ENCODE measurements at regions of chr4 and their contacts with region 1.

Region 1: GRCh38 chr4:88284439-88285234 is at the start of gene PPM1K:
- DNase-seq: peak; percentile 100
- ATAC-seq: peak; percentile 88
- H3K4me3 Mint-ChIP-seq: peak within 1 kb of the TSS; percentile 96
- H3K27ac Mint-ChIP-seq: peak within 1 kb of the TSS; percentile 100
- H3K4me1 Mint-ChIP-seq: peaks cover 35% of the 10 kb centered on the region
- H3K27me3 Mint-ChIP-seq: no peaks in the 10 kb centered on the region
- total RNA-seq, gene PPM1K: 44.2 to 53.4 TPM

Region 2: DNA sequence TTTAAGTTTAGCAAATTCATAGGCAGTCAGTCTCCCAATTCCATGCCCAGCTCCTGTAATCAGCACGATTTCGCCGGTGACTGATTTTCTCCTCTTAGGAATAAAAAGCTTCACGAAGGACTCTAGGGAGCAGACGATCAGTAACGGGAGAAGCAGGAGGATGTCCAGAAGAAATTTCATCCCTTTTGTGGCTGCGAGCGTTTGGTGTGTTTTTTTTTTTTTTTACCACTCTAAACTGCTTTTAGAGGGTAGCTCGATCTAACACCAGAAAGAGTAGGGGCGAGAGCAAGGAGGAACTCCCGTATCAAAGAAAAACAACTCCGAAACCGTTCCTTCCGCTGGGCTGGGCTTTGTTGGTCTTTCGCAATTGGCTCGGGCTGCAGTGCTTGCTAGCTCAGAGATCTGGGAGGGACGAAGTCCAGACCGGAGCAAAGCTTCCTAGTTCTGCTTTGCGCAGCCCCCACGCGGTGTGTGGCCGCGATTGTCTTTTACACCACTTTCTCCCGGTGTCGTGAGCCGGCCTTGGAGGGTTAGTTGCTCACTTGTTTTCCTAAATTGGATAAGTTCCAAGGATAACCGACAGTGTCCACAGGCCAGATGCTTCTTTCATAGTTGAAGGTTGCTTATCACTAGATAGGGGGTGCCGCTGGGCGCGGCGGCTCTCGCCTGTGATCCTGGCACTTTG is 893.6 kb before region 1 on chr4 and contains the start of gene HSD17B11:
- CTCF ChIA-PET with region 1: no interaction called
- POLR2A ChIA-PET with region 1: no interaction called
- intact Hi-C with region 1: loop called in 1 of 2 experiments (anchors 2 kb)
- DNase-seq: peak; percentile 87
- ATAC-seq: peak; percentile 98
- H3K4me3 Mint-ChIP-seq: peak within 1 kb of the TSS; percentile 78
- H3K27ac Mint-ChIP-seq: peak within 1 kb of the TSS; percentile 92
- H3K4me1 Mint-ChIP-seq: peaks cover 47% of the 10 kb centered on the region
- H3K27me3 Mint-ChIP-seq: no peaks in the 10 kb centered on the region
- total RNA-seq, gene HSD17B11: 12.0 to 14.9 TPM

Region 3: DNA sequence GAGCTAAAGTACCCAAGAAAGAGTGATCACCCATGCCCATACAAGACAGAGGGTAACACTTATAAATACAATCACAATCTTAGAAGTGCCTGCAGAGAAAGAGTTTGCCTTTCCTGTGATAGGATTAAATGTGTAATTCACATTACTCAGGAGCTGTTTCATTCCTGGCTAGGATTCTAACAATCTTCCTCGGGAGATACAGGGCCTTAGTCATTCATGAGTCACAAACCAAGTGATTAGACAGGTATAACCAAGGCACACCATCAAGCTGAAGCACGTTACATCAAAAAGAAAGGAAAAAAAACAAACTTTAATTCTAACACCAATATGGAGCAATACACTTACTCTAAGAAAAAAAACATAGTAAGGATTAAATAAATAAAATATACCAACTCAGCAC is 141.1 kb before region 1 on chr4:
- CTCF ChIA-PET with region 1: no interaction called
- POLR2A ChIA-PET with region 1: no interaction called
- intact Hi-C with region 1: no loop called
- DNase-seq: no peak
- ATAC-seq: no peak
- H3K4me3 Mint-ChIP-seq: no peak overlapping the region
- H3K27ac Mint-ChIP-seq: no peak overlapping the region
- H3K4me1 Mint-ChIP-seq: no peaks in the 10 kb centered on the region
- H3K27me3 Mint-ChIP-seq: peaks cover 2% of the 10 kb centered on the region

Region 4: DNA sequence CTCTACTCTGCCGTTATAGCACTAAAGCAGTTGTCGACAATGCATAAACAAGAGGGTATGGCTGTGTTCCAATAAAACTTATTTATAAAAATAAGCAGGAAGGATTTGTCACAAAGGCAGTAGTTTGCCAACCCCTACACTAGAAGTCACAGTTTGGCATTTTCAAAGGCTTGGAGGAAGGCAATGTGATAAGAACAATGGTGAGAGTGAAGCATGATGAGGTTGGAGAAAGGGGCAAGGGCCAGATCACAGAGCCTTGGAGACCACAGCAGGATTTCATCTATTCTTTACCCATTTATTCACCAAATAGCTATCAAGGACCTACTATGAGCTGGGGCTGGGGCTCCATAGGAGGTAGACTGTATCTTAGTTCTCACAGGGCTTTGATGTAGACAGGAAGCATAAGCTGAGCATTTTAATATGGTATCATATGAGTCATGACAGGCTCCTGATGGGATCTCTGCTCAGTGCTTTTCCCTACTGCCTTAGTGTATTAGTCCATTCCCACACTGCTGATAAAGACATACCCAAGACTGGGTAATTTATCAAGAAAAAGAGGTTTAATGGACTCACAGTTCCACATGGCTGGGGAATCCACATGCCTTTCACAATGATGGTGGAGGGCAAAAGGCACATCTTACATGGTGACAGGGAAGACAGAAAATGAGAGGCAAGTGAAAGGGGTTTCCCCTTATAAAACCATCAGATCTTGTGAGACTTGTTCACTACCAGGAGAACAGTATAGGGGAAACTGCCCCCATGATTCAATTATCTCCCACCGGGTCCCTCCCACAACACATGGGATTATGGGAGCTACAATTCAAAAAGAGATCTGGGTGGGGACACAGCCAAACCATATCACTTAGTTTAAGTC is 59.2 kb before region 1 on chr4:
- CTCF ChIA-PET with region 1: no interaction called
- POLR2A ChIA-PET with region 1: no interaction called
- intact Hi-C with region 1: loop called in 1 of 2 experiments (anchors 5 kb)
- DNase-seq: peak; percentile 12
- ATAC-seq: peak; percentile 88
- H3K4me3 Mint-ChIP-seq: no peak overlapping the region
- H3K27ac Mint-ChIP-seq: no peak overlapping the region
- H3K4me1 Mint-ChIP-seq: peaks cover 10% of the 10 kb centered on the region
- H3K27me3 Mint-ChIP-seq: no peaks in the 10 kb centered on the region

Region 5: GRCh38 chr4:88456757-88457306 is 172.2 kb after region 1 on chr4 and contains the start of gene HERC5:
- CTCF ChIA-PET with region 1: interaction called, 3 read pairs
- POLR2A ChIA-PET with region 1: interaction called, 17 read pairs
- intact Hi-C with region 1: loop called (anchors 1 kb)
- DNase-seq: peak; percentile 94
- ATAC-seq: peak; percentile 94
- H3K4me3 Mint-ChIP-seq: peak within 1 kb of the TSS; percentile 87
- H3K27ac Mint-ChIP-seq: peak within 1 kb of the TSS; percentile 100
- H3K4me1 Mint-ChIP-seq: peaks cover 7% of the 10 kb centered on the region
- H3K27me3 Mint-ChIP-seq: no peaks in the 10 kb centered on the region
- total RNA-seq, gene HERC5: 21.1 TPM

Region 6: GRCh38 chr4:88583631-88584475 is 299.2 kb after region 1 on chr4:
- CTCF ChIA-PET with region 1: no interaction called
- POLR2A ChIA-PET with region 1: no interaction called
- intact Hi-C with region 1: no loop called
- DNase-seq: no peak
- ATAC-seq: peak; percentile 23
- H3K4me3 Mint-ChIP-seq: no peak overlapping the region
- H3K27ac Mint-ChIP-seq: no peak overlapping the region
- H3K4me1 Mint-ChIP-seq: peaks cover 5% of the 10 kb centered on the region
- H3K27me3 Mint-ChIP-seq: no peaks in the 10 kb centered on the region

Region 7: GRCh38 chr4:88697588-88698329 is 413.1 kb after region 1 on chr4 and contains the start of gene NAP1L5:
- CTCF ChIA-PET with region 1: no interaction called
- POLR2A ChIA-PET with region 1: no interaction called
- intact Hi-C with region 1: loop called in 1 of 2 experiments (anchors 5 kb)
- DNase-seq: peak; percentile 81
- ATAC-seq: peak; percentile 89
- H3K4me3 Mint-ChIP-seq: peak within 1 kb of the TSS; percentile 75
- H3K27ac Mint-ChIP-seq: peak within 1 kb of the TSS; percentile 62
- H3K4me1 Mint-ChIP-seq: peaks cover 10% of the 10 kb centered on the region
- H3K27me3 Mint-ChIP-seq: no peaks in the 10 kb centered on the region
- total RNA-seq, gene NAP1L5: 4.9 to 5.2 TPM

Region 8: GRCh38 chr4:89110986-89111832 is 826.6 kb after region 1 on chr4 and contains the start of gene TIGD2:
- CTCF ChIA-PET with region 1: interaction called, 3 read pairs
- POLR2A ChIA-PET with region 1: no interaction called
- intact Hi-C with region 1: loop called in 1 of 2 experiments (anchors 1 kb)
- DNase-seq: peak; percentile 93
- ATAC-seq: peak; percentile 95
- H3K4me3 Mint-ChIP-seq: peak within 1 kb of the TSS; percentile 73
- H3K27ac Mint-ChIP-seq: peak within 1 kb of the TSS; percentile 86
- H3K4me1 Mint-ChIP-seq: peaks cover 18% of the 10 kb centered on the region
- H3K27me3 Mint-ChIP-seq: peaks cover 16% of the 10 kb centered on the region
- total RNA-seq, gene TIGD2: 2.1 to 2.3 TPM

Measured in activated CD4-positive, alpha-beta T cell treated with anti-CD3 and anti-CD28 coated beads for 36 hours (primary cell).